CD4-positive, alpha-beta T cell (primary cell): ENCODE measurements at regions of chr5 and their contacts with region 1.

Region 1: DNA sequence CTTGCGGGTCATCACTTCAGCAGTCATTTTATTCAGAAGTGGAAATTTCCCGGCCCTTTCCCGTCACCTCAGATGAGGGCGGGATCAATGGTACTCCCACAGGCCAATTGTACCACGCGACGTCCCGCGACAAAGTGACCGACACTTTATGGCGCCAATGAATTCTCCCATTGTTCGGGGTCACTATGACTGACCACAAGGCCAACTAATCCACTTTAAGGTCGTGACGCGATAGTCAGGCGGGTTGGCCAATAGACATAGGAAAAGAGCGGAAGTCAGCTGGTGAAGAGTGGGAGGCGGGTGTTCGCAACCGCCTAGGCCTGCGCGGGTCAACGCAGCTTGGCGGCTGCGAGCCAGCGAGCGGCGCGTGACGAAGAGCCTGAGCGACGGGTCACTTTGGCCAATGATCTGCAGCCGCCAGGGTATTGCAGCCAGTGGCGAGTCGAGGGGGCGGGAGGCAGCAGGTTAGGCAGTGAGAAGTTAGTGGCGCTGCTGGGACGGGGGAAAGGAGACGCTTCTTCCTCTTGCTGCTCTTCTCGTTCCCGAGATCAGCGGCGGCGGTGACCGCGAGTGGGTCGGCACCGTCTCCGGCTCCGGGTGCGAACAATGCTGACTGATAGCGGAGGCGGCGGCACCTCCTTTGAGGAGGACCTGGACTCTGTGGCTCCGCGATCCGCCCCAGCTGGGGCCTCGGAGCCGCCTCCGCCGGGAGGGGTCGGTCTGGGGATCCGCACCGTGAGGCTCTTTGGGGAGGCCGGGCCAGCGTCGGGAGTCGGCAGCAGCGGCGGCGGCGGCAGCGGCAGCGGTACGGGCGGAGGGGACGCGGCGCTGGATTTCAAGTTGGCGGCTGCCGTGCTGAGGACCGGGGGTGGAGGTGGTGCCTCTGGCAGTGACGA is at the start of gene ANKHD1:
- DNase-seq: peak; percentile 90 to 100 (median 94)
- ATAC-seq: peak; percentile 78
- H3K4me3 ChIP-seq: peak within 1 kb of the TSS; percentile 97
- H3K4me3 Mint-ChIP-seq: no peak within 1 kb of the TSS
- H3K27ac ChIP-seq: peak within 1 kb of the TSS; percentile 91 to 96
- H3K27ac Mint-ChIP-seq: no peak within 1 kb of the TSS
- H3K4me1 ChIP-seq: peaks cover 36% of the 10 kb centered on the region
- H3K4me1 Mint-ChIP-seq: peaks cover 41% of the 10 kb centered on the region
- H3K27me3 ChIP-seq: no peaks in the 10 kb centered on the region
- H3K27me3 Mint-ChIP-seq: no peaks in the 10 kb centered on the region
- CTCF ChIP-seq: no peak
- total RNA-seq, gene ANKHD1: 202 to 212 TPM

Region 2: DNA sequence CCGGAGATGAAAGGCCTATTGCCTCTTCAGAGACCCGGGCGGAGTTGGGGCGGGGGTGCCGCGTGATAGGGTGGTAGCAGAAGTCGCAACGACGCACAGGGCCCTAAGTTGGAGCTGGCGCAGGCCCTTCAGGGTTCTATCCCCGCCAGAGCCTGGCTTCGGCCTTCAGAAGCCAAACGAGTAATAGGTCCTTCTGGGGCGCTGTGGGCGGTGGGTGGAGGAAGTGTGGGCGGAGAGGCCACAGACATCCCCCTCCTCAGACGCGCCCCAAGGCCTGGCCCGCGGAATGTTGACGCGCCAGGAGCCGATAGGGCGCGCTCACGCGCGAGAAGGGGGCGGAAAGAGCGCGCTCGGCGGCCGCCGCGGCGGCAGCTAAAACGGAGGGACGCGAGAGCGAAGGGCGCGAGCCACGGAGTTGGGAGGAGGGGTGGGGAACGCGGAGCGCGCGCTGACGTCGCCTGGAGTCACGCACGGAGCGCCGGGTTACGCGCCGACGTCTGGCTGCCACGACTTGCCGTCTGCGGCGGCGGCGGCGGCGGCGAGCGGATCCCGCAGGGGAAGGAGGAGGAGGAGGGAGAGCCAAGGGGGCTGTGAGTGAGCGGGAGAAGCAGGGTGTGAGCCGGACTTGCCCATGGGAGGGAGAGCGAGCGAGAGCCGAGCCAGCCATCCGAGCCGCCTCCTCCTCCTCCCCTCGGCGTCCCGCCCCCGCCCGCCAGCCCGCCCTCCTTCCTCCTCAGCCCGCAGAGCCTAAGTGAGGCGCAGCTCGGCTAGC is 294.1 kb before region 1 on chr5:
- CTCF ChIA-PET with region 1: interaction called, 3 read pairs
- POLR2A ChIA-PET with region 1: interaction called, 8 read pairs
- intact Hi-C with region 1: loop called in 1 of 2 experiments (anchors 5 kb)
- DNase-seq: peak; percentile 89 to 98 (median 93)
- ATAC-seq: peak; percentile 80
- H3K4me3 ChIP-seq: peak overlapping the region; percentile 76
- H3K4me3 Mint-ChIP-seq: peak overlapping the region; percentile 96
- H3K27ac ChIP-seq: peak overlapping the region; percentile 92 to 96
- H3K27ac Mint-ChIP-seq: peak overlapping the region; percentile 100
- H3K4me1 ChIP-seq: peaks cover 34% of the 10 kb centered on the region
- H3K4me1 Mint-ChIP-seq: peaks cover 59% of the 10 kb centered on the region
- H3K27me3 ChIP-seq: peaks cover 10 to 11% of the 10 kb centered on the region in 2 experiments
- H3K27me3 Mint-ChIP-seq: peaks cover 11% of the 10 kb centered on the region
- CTCF ChIP-seq: peak; percentile 23

Region 3: DNA sequence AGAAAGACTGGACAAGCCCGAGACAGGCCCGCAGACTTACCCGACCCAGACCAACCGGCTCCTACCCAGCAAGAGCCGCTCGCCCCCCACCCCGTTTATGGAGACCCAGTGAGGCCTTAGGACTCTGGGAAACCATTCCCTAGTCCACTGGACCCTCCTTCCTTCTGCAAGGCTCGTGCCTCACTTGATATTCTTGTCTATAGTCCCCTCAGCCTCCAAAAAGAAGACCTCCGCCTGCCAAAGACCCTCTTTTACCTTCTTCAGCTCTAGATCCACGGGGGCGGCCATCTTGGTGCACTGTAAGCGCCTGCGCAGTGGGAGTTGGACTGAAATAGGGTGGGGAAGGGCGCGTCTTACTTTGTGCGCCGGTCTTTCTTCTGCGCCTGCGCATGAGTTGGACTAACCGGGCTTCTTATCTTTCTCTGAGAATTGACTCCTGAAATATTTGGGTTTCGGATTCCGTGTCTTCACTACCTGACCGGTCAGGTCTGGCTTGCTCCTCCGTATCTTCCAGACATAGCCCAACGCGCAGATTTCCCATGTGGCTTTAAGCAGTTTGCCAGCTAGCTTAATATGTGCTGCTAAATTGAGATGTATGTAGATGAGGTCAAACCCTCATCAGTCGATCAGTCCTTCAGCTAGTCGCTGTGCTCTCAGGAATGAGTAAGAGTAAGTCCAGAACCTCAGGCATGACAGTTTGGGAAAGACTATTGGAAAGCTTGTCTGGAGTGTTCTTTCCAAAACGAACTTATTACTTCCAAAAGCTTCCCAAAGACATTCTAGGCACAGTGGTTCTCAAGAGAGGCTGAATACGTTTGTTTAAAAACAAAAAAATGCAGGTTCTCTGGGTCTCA is 98.6 kb before region 1 on chr5 and contains the start of gene PFDN1:
- CTCF ChIA-PET with region 1: no interaction called
- POLR2A ChIA-PET with region 1: interaction called, 9 read pairs
- intact Hi-C with region 1: loop called in 1 of 2 experiments (anchors 2 kb)
- DNase-seq: peak; percentile 79 to 97 (median 88)
- ATAC-seq: peak; percentile 99
- H3K4me3 ChIP-seq: peak within 1 kb of the TSS; percentile 73
- H3K4me3 Mint-ChIP-seq: peak within 1 kb of the TSS; percentile 97
- H3K27ac ChIP-seq: peak within 1 kb of the TSS; percentile 38 to 42
- H3K27ac Mint-ChIP-seq: peak within 1 kb of the TSS; percentile 92
- H3K4me1 ChIP-seq: peaks cover 14% of the 10 kb centered on the region
- H3K4me1 Mint-ChIP-seq: peaks cover 30% of the 10 kb centered on the region
- H3K27me3 ChIP-seq: no peaks in the 10 kb centered on the region
- H3K27me3 Mint-ChIP-seq: no peaks in the 10 kb centered on the region
- CTCF ChIP-seq: no peak
- total RNA-seq, gene PFDN1: 21.3 to 22.0 TPM

Region 4: DNA sequence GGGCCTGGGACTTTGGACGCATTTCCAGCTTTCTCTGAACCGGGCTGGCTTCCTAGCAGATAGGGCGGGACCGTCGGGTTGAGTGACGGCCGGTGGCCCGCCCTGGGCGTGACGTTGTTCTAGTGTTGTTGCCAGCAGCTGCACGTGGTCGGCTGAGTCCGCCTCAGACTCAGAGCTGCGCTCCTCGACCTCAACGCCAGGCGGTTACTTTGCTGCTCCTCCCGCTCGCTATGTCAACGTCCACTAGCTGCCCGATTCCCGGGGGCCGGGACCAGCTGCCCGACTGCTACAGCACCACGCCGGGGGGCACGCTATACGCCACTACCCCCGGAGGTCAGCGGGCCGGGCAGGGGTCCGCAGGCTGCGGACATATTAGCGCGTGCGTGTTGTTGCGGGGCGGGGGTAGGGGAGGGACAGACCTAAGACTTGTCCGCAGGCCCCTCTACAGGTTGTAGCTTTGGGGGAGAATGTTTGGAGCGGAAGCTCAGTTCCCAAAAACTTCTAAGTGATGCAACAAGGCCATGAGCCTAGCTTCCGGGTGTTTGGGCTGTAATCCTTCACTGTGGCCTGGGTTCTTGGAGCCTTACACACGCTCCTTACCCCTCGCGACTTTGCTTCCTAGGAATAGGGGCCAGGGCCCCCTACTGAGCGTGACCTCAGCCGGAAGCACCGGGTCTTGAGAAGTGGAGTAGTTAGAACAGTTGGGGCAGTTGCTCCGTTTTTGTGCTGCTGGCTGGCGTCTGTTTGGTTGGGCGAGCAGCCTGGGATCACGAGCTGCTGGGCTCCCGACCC is 146.1 kb after region 1 on chr5 and contains the start of gene EIF4EBP3:
- CTCF ChIA-PET with region 1: interaction called, 3 read pairs
- POLR2A ChIA-PET with region 1: interaction called, 37 read pairs
- intact Hi-C with region 1: loop called (anchors 5 kb)
- DNase-seq: peak; percentile 79 to 95 (median 86)
- ATAC-seq: peak; percentile 97
- H3K4me3 ChIP-seq: peak within 1 kb of the TSS; percentile 79
- H3K4me3 Mint-ChIP-seq: peak within 1 kb of the TSS; percentile 96
- H3K27ac ChIP-seq: peak within 1 kb of the TSS; percentile 88 to 89
- H3K27ac Mint-ChIP-seq: peak within 1 kb of the TSS; percentile 96
- H3K4me1 ChIP-seq: peaks cover 31% of the 10 kb centered on the region
- H3K4me1 Mint-ChIP-seq: peaks cover 38% of the 10 kb centered on the region
- H3K27me3 ChIP-seq: no peaks in the 10 kb centered on the region
- H3K27me3 Mint-ChIP-seq: no peaks in the 10 kb centered on the region
- CTCF ChIP-seq: peak; percentile 72
- total RNA-seq, gene EIF4EBP3: 12.7 to 15.1 TPM

Region 5: GRCh38 chr5:140639148-140639979 is 237.8 kb after region 1 on chr5 and contains the start of gene TMCO6:
- CTCF ChIA-PET with region 1: no interaction called
- POLR2A ChIA-PET with region 1: interaction called, 11 read pairs
- intact Hi-C with region 1: loop called (anchors 2 to 5 kb)
- DNase-seq: peak; percentile 94 to 99 (median 96)
- ATAC-seq: peak; percentile 98
- H3K4me3 ChIP-seq: peak within 1 kb of the TSS; percentile 73
- H3K4me3 Mint-ChIP-seq: peak within 1 kb of the TSS; percentile 92
- H3K27ac ChIP-seq: peak within 1 kb of the TSS; percentile 77 to 94
- H3K27ac Mint-ChIP-seq: peak within 1 kb of the TSS; percentile 93
- H3K4me1 ChIP-seq: peaks cover 28% of the 10 kb centered on the region
- H3K4me1 Mint-ChIP-seq: peaks cover 34% of the 10 kb centered on the region
- H3K27me3 ChIP-seq: no peaks in the 10 kb centered on the region
- H3K27me3 Mint-ChIP-seq: no peaks in the 10 kb centered on the region
- CTCF ChIP-seq: peak; percentile 76
- total RNA-seq, gene TMCO6: 20.9 to 21.1 TPM

Region 6: GRCh38 chr5:140690941-140691924 is 289.6 kb after region 1 on chr5 and contains the starts of genes HARS1 and HARS2:
- CTCF ChIA-PET with region 1: no interaction called
- POLR2A ChIA-PET with region 1: interaction called, 20 read pairs
- intact Hi-C with region 1: loop called in 1 of 2 experiments (anchors 2 kb)
- DNase-seq: peak; percentile 61 to 93 (median 78)
- ATAC-seq: peak; percentile 90
- H3K4me3 ChIP-seq: peak within 1 kb of the TSS; percentile 98
- H3K4me3 Mint-ChIP-seq: peak within 1 kb of the TSS; percentile 99
- H3K27ac ChIP-seq: peak within 1 kb of the TSS; percentile 64 to 90
- H3K27ac Mint-ChIP-seq: peak within 1 kb of the TSS; percentile 97
- H3K4me1 ChIP-seq: peaks cover 28% of the 10 kb centered on the region
- H3K4me1 Mint-ChIP-seq: peaks cover 35% of the 10 kb centered on the region
- H3K27me3 ChIP-seq: no peaks in the 10 kb centered on the region
- H3K27me3 Mint-ChIP-seq: no peaks in the 10 kb centered on the region
- CTCF ChIP-seq: no peak
- total RNA-seq, gene HARS1: 53.5 to 54.1 TPM
- total RNA-seq, gene HARS2: 38.1 to 38.3 TPM

Region 7: GRCh38 chr5:140710899-140711552 is 309.4 kb after region 1 on chr5:
- CTCF ChIA-PET with region 1: no interaction called
- POLR2A ChIA-PET with region 1: interaction called, 49 read pairs
- intact Hi-C with region 1: no loop called
- DNase-seq: peak; percentile 70 to 97 (median 82)
- ATAC-seq: peak; percentile 77
- H3K4me3 ChIP-seq: peak overlapping the region; percentile 70
- H3K4me3 Mint-ChIP-seq: peak overlapping the region; percentile 99
- H3K27ac ChIP-seq: peak overlapping the region; percentile 87 to 88
- H3K27ac Mint-ChIP-seq: peak overlapping the region; percentile 98
- H3K4me1 ChIP-seq: peaks cover 9% of the 10 kb centered on the region
- H3K4me1 Mint-ChIP-seq: peaks cover 27% of the 10 kb centered on the region
- H3K27me3 ChIP-seq: no peaks in the 10 kb centered on the region
- H3K27me3 Mint-ChIP-seq: peaks cover 8% of the 10 kb centered on the region
- CTCF ChIP-seq: no peak